Activated B cell treated with CpG ODN at 0.5 μM for 24 hours (primary cell): ENCODE measurements at regions of chr5 and their contacts with region 1.

Region 1: DNA sequence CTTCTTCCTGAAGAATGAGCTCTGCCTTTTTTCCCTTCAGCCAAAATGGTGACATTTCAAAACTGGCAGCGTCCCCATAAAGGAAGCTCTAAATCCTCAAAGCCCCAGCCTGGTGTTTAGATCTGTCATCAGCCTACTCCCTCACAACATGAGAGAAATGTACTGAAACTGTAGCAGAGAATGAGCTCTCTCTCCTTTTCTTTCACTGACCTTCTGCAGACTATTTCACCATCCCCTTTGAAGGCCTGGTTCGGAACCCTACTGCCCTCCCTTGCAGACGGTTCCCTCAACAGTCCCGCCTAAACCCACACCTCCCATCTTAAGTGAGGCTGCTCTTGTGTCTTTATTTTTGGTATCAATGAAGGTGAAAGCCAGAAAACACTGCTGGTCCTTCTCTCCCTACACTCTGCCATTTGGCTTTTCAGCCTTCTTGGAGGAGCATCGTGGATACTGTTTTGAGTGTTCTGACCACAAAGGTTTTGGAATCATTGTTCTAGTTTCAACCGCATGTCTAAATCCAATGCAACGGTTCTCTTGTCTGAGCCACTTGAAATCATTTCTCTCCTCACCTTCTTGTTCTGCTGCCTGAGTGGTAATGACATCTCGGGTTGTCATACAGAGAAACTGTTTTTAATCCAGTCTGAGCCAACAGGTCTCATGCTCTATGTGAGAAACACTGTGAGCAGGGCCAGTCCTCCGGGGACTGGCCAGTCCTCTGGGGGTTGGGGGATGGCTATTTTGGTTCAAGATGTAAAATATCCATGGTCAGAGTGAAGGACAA is 39.0 kb downstream of the ITK start:
- DNase-seq: no peak
- ATAC-seq: no peak
- H3K4me3 Mint-ChIP-seq: no peak overlapping the region
- H3K27ac Mint-ChIP-seq: no peak overlapping the region
- H3K4me1 Mint-ChIP-seq: peaks cover 47% of the 10 kb centered on the region
- H3K27me3 Mint-ChIP-seq: no peaks in the 10 kb centered on the region
- CTCF ChIP-seq: no peak

Region 2: DNA sequence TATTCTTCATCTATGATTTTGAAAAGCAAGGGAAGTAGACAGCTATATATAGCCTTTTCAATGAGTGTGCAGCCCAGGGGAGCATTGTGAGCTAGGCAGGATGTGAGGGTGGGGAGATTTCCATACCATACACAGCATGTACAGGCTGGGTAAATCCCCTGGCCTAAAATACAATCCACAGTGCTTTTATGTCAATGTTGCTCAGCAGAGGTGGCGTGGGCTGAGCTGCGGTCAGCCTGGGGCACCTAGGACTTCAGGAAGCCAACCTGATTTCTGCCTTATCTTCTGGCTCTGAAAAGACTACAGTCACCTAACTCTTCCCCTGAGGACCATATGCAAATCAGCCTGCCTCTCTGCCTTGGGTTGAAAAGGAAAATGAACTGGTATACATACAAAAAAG is 47.3 kb before region 1 on chr5:
- CTCF ChIA-PET with region 1: no interaction called
- POLR2A ChIA-PET with region 1: interaction called, 3 read pairs
- intact Hi-C with region 1: loop called (anchors 1 kb)
- DNase-seq: peak; percentile 44
- ATAC-seq: peak; percentile 96
- H3K4me3 Mint-ChIP-seq: peak overlapping the region; percentile 62
- H3K27ac Mint-ChIP-seq: peak overlapping the region; percentile 86
- H3K4me1 Mint-ChIP-seq: peaks cover 30% of the 10 kb centered on the region
- H3K27me3 Mint-ChIP-seq: no peaks in the 10 kb centered on the region
- CTCF ChIP-seq: no peak

Region 3: GRCh38 chr5:157198277-157198986 is 21.2 kb before region 1 on chr5:
- CTCF ChIA-PET with region 1: no interaction called
- POLR2A ChIA-PET with region 1: no interaction called
- intact Hi-C with region 1: loop called (anchors 2 kb)
- DNase-seq: no peak
- ATAC-seq: no peak
- H3K4me3 Mint-ChIP-seq: no peak overlapping the region
- H3K27ac Mint-ChIP-seq: no peak overlapping the region
- H3K4me1 Mint-ChIP-seq: peaks cover 7% of the 10 kb centered on the region
- H3K27me3 Mint-ChIP-seq: no peaks in the 10 kb centered on the region
- CTCF ChIP-seq: no peak

Region 4: DNA sequence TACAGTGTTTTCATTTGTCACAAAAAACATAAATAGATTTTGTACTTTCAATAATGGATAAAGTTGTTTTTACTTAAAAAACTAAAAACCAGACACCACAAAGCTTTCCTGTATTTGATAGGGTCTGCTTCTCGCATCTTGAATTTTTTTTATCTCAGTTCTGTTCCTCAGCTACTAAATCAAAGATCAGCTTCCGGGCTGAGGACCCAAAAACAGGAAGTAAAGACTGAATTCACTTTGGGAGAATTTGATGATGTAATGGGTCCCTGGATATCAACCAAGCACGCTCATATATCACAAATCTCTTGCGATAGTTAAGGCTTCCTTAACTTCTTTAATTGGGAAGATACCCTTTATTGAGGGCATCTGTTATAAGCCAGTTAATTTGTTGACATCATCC is 14.9 kb before region 1 on chr5:
- CTCF ChIA-PET with region 1: interaction called, 3 read pairs
- POLR2A ChIA-PET with region 1: no interaction called
- intact Hi-C with region 1: loop called (anchors 1 kb)
- DNase-seq: no peak
- ATAC-seq: peak; percentile 68
- H3K4me3 Mint-ChIP-seq: no peak overlapping the region
- H3K27ac Mint-ChIP-seq: peak overlapping the region; percentile 53
- H3K4me1 Mint-ChIP-seq: peaks cover 6% of the 10 kb centered on the region
- H3K27me3 Mint-ChIP-seq: no peaks in the 10 kb centered on the region
- CTCF ChIP-seq: no peak